ENCODE measurements at regions of chr5 and their contacts with region 1.

Region 1: DNA sequence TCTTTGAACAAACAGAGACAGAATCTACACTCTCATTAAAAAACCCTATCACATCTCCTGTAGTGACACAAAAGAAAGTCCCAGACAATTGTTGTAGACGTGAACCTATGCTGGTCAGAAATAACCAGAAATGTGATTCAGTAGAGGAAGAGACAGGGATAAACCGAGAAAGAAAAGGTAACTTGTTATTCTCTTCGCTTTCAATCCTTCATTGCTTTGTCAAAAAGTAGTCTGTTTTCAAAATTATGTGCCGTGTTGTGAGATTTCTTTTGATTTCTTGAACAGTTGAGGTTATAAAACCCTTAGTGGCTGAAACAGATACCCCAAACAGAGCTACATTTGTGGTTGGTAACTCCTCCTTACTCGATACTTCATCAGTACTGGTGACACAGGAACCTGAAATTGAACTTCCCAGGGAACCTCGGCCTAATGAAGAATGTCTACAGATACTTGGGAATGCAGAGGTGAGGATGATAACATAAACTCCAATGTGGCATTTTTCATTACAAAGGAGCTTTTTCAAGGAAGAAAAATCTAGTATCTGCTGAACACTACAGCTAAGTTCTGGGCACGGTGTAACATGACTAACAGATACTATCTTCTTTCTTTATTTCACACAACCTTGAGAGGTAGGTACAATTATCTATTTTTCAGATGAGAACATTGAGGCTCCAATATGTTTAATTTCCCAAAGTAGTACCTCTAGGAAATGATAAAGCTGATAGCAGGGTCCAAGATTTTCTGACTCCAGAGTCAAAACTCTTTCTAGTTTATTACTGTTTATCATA is 14.3 kb downstream of the HMGCR start:
- DNase-seq: no peak
- H3K4me3 ChIP-seq: no peak overlapping the region
- CTCF ChIP-seq: no peak

Region 2: GRCh38 chr5:75037135-75037534 is 314.2 kb before region 1 on chr5:
- CTCF ChIA-PET with region 1: no interaction called
- POLR2A ChIA-PET with region 1: no interaction called
- DNase-seq: peak; percentile 51
- H3K4me3 ChIP-seq: no peak overlapping the region
- CTCF ChIP-seq: no peak

Region 3: DNA sequence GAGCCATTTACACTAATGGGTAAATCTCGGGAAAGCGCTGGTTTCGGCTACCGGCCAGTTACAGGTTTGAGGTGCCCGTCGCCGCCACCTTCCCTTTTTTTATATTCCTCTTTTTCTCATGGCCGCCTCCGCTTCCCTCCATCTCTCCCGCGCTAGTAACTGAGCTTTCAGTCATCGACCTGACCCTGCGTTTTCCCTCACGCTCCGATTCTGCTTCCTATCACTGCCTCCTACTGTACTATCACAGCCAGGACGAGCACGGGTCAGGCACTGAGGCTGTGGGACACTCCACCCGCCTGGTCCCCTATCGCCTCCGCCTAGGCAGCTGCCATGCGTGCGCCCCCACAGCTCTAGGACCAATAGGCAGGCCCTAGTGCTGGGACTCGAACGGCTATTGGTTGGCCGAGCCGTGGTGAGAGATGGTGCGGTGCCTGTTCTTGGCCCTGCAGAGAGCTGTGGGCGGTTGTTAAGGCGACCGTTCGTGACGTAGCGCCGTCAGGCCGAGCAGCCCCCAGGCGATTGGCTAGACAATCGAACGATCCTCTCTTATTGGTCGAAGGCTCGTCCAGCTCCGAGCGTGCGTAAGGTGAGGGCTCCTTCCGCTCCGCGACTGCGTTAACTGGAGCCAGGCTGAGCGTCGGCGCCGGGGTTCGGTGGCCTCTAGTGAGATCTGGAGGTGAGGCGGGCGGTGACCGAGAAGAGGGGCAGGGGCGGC is 14.6 kb before region 1 on chr5 and contains the start of gene HMGCR:
- CTCF ChIA-PET with region 1: interaction called, 13 read pairs
- POLR2A ChIA-PET with region 1: interaction called, 3 read pairs
- DNase-seq: peak; percentile 96
- H3K4me3 ChIP-seq: peak within 1 kb of the TSS; percentile 92
- CTCF ChIP-seq: peak; percentile 37

Region 4: GRCh38 chr5:75450070-75450469 is 98.7 kb after region 1 on chr5:
- CTCF ChIA-PET with region 1: no interaction called
- POLR2A ChIA-PET with region 1: no interaction called
- DNase-seq: no peak
- H3K4me3 ChIP-seq: no peak overlapping the region
- CTCF ChIP-seq: no peak